Adrenal gland (tissue), 19 donors: ENCODE measurements at regions of chr10 and their contacts with region 1.

Region 1: DNA sequence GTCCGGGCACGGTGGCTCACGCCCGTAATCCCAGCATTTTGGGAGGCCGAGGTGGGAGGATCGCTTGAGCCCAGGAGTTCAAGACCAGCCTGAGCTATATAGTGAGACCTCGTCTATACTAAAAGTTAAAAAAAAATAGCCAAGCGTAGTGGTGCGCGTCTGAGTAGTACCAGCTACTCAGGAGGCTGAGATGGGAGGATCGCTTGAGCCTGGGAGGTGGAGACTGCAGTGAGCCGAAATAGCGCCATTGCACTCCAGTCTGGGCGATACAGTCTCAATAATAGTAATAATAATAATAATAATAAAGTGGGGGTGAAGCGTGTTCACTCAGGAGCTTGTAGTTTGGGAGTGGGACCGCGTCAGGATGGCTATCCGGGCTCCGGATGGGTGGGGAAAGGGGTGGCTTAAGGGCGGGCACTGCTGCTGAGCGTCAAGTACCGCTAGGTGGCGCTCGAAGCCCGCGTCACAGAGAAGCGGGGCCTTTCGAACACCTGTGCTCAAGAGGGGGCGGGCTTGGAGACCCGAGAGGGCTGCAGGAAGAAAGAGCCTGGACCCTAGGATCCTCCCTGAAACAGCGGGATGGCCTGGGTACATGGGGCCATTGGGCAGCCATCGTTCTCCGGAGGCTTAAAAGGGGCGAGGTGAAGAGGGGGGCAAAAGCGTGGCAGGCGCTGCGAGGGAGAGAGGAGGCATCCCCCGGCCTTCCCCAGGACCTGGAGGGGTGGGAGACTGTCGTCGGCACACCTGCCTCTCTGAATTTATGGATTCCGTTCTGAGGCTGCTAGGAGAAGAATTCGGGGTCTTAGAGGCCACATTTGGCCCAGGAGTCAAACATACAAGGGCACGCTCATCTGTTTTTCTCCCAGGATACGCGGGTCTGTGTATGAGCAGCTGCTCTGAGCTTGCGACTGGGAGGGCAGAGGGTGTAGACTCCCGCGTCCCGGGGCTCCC is 14.5 kb downstream of the LBX1 start:
- DNase-seq: peak; percentile 31 to 72 (median 62)
- H3K4me3 ChIP-seq: no peak overlapping the region
- H3K27ac ChIP-seq: no peak overlapping the region
- H3K4me1 ChIP-seq: peaks cover 7 to 27% of the 10 kb centered on the region in 2 donors
- H3K27me3 ChIP-seq: peaks cover 70% of the 10 kb centered on the region
- CTCF ChIP-seq: peak; percentile 54 to 84 (median 72)
- POLR2A ChIP-seq: no peak

Region 2: GRCh38 chr10:101095542-101096213 is 119.0 kb before region 1 on chr10:
- intact Hi-C with region 1: no loop called
- DNase-seq: peak; percentile 59 to 87 (median 70)
- H3K4me3 ChIP-seq: no peak overlapping the region
- H3K27ac ChIP-seq: no peak overlapping the region
- H3K4me1 ChIP-seq: no peaks in the 10 kb centered on the region
- H3K27me3 ChIP-seq: peaks cover 53% of the 10 kb centered on the region
- CTCF ChIP-seq: peak; percentile 67 to 88 (median 78)
- POLR2A ChIP-seq: no peak

Region 3: GRCh38 chr10:101287997-101288635 is 73.4 kb after region 1 on chr10:
- intact Hi-C with region 1: loop called (anchors 5 to 10 kb)
- DNase-seq: peak in 3 of 7 donors; percentile 12 to 58 (median 33)
- H3K4me3 ChIP-seq: no peak overlapping the region
- H3K27ac ChIP-seq: no peak overlapping the region
- H3K4me1 ChIP-seq: peaks cover 9 to 12% of the 10 kb centered on the region in 2 donors
- H3K27me3 ChIP-seq: peaks cover 37% of the 10 kb centered on the region
- CTCF ChIP-seq: no peak
- POLR2A ChIP-seq: no peak

Region 4: GRCh38 chr10:101297901-101298486 is 83.3 kb after region 1 on chr10:
- intact Hi-C with region 1: loop called in 1 of 2 experiments (anchors 10 kb)
- DNase-seq: peak; percentile 43 to 82 (median 65)
- H3K4me3 ChIP-seq: no peak overlapping the region
- H3K27ac ChIP-seq: no peak overlapping the region
- H3K4me1 ChIP-seq: no peaks in the 10 kb centered on the region
- H3K27me3 ChIP-seq: no peaks in the 10 kb centered on the region
- CTCF ChIP-seq: peak; percentile 55 to 88 (median 72)
- POLR2A ChIP-seq: no peak

Region 5: GRCh38 chr10:101467286-101467770 is 252.6 kb after region 1 on chr10:
- intact Hi-C with region 1: loop called in 1 of 2 experiments (anchors 10 kb)
- DNase-seq: peak in 5 of 7 donors; percentile 30 to 54 (median 43)
- H3K4me3 ChIP-seq: no peak overlapping the region
- H3K27ac ChIP-seq: no peak overlapping the region
- H3K4me1 ChIP-seq: peaks cover 5 to 19% of the 10 kb centered on the region in 2 donors
- H3K27me3 ChIP-seq: no peaks in the 10 kb centered on the region
- CTCF ChIP-seq: peak; percentile 72 to 84 (median 76)
- POLR2A ChIP-seq: no peak

Region 6: GRCh38 chr10:101782811-101783735 is 568.4 kb after region 1 on chr10 and contains the start of gene NPM3:
- intact Hi-C with region 1: loop called in 1 of 2 experiments (anchors 5 kb)
- DNase-seq: peak; percentile 78 to 91 (median 85)
- H3K4me3 ChIP-seq: peak within 1 kb of the TSS; percentile 6 to 88 (median 52)
- H3K27ac ChIP-seq: peak within 1 kb of the TSS in 3 of 5 donors; percentile 11 to 53 (median 17)
- H3K4me1 ChIP-seq: peaks cover 23 to 34% of the 10 kb centered on the region in 2 donors
- H3K27me3 ChIP-seq: peaks cover 8% of the 10 kb centered on the region
- CTCF ChIP-seq: no peak
- POLR2A ChIP-seq: peak in 1 of 2 donors; percentile 45
- total RNA-seq, gene NPM3: 20.6 to 51.5 (median 40.4) TPM